Naive thymus-derived CD4-positive, alpha-beta T cell (primary cell): ENCODE measurements at regions of chr12 and their contacts with region 1.

Region 1: GRCh38 chr12:110826592-110827200 is 20.1 kb upstream of the CCDC63 start:
- DNase-seq: peak; percentile 61 to 85 (median 77)
- ATAC-seq: peak; percentile 98
- H3K4me3 ChIP-seq: no peak overlapping the region
- H3K4me3 Mint-ChIP-seq: peak overlapping the region in 9 of 10 donors; percentile 35 to 75 (median 58)
- H3K27ac ChIP-seq: no peak overlapping the region
- H3K27ac Mint-ChIP-seq: peak overlapping the region in 8 of 9 donors; percentile 4 to 81 (median 20)
- H3K4me1 ChIP-seq: no peaks in the 10 kb centered on the region
- H3K4me1 Mint-ChIP-seq: peaks cover 0 to 10% (median 6%) of the 10 kb centered on the region in 7 donors
- H3K27me3 ChIP-seq: no peaks in the 10 kb centered on the region
- H3K27me3 Mint-ChIP-seq: peaks cover 0 to 4% (median 0%) of the 10 kb centered on the region in 5 donors

Region 2: GRCh38 chr12:110548678-110549077 is 278.0 kb before region 1 on chr12:
- CTCF ChIA-PET with region 1: no interaction called
- POLR2A ChIA-PET with region 1: no interaction called
- intact Hi-C with region 1: loop called (anchors 1 to 5 kb)
- DNase-seq: no peak
- ATAC-seq: no peak
- H3K4me3 ChIP-seq: no peak overlapping the region
- H3K4me3 Mint-ChIP-seq: no peak overlapping the region
- H3K27ac ChIP-seq: no peak overlapping the region
- H3K27ac Mint-ChIP-seq: peak overlapping the region in 3 of 9 donors; percentile 28 to 68 (median 55)
- H3K4me1 ChIP-seq: no peaks in the 10 kb centered on the region
- H3K4me1 Mint-ChIP-seq: peaks cover 10 to 55% (median 44%) of the 10 kb centered on the region in 7 donors
- H3K27me3 ChIP-seq: no peaks in the 10 kb centered on the region
- H3K27me3 Mint-ChIP-seq: no peaks in the 10 kb centered on the region

Region 3: DNA sequence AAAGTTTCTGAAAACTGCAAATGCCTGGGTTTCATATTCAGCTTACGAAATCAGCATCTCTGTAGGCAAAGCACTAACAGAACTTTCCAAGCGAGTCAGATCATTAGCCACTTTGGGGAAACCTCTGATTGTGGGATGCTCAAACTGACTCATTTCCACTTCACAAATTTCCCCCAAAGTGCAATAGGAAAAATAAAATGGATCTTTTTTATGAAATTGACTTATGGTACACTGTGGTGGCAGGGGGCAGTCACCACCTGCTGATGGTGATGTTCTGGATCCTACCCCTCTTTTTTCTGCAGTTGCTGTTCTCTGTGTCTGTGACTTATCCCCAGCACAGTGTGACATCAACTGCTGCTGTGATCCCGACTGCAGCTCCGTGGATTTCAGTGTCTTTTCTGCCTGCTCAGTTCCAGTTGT is 207.2 kb before region 1 on chr12:
- CTCF ChIA-PET with region 1: no interaction called
- POLR2A ChIA-PET with region 1: interaction called, 8 read pairs
- intact Hi-C with region 1: loop called (anchors 1 kb)
- DNase-seq: peak in 2 of 9 donors; percentile 15 to 26
- ATAC-seq: no peak
- H3K4me3 ChIP-seq: no peak overlapping the region
- H3K4me3 Mint-ChIP-seq: no peak overlapping the region
- H3K27ac ChIP-seq: no peak overlapping the region
- H3K27ac Mint-ChIP-seq: no peak overlapping the region
- H3K4me1 ChIP-seq: peaks cover under 1 to 1% of the 10 kb centered on the region in 2 donors
- H3K4me1 Mint-ChIP-seq: peaks cover 0 to 11% (median under 1%) of the 10 kb centered on the region in 7 donors
- H3K27me3 ChIP-seq: no peaks in the 10 kb centered on the region
- H3K27me3 Mint-ChIP-seq: no peaks in the 10 kb centered on the region

Region 4: DNA sequence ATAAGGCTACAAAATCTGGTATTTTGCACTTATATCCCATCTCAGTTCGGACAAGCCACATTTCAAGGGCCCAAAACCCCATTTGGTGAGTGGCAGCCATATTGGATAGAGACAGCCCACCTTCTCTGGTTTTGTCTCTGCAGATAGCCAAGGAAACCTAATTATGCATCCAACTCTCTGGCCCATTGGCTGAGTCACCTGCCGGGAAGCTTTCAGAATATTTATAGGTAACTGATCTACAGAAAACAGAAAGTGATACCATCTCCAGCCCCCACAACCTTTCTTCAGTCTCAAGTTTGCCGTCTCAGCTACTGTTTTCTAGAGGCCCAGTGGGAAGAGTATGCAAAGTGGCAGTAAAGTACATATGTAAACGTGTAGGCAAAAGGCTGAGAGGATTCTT is 50.3 kb before region 1 on chr12:
- CTCF ChIA-PET with region 1: no interaction called
- POLR2A ChIA-PET with region 1: interaction called, 3 read pairs
- intact Hi-C with region 1: loop called (anchors 2 to 5 kb)
- DNase-seq: peak in 1 of 9 donors; percentile 64
- ATAC-seq: no peak
- H3K4me3 ChIP-seq: no peak overlapping the region
- H3K4me3 Mint-ChIP-seq: peak overlapping the region in 5 of 10 donors; percentile 4 to 60 (median 7)
- H3K27ac ChIP-seq: no peak overlapping the region
- H3K27ac Mint-ChIP-seq: peak overlapping the region; percentile 12 to 91 (median 64)
- H3K4me1 ChIP-seq: peaks cover 9 to 43% of the 10 kb centered on the region in 2 donors
- H3K4me1 Mint-ChIP-seq: peaks cover 28 to 66% (median 60%) of the 10 kb centered on the region in 7 donors
- H3K27me3 ChIP-seq: no peaks in the 10 kb centered on the region
- H3K27me3 Mint-ChIP-seq: no peaks in the 10 kb centered on the region

Region 5: DNA sequence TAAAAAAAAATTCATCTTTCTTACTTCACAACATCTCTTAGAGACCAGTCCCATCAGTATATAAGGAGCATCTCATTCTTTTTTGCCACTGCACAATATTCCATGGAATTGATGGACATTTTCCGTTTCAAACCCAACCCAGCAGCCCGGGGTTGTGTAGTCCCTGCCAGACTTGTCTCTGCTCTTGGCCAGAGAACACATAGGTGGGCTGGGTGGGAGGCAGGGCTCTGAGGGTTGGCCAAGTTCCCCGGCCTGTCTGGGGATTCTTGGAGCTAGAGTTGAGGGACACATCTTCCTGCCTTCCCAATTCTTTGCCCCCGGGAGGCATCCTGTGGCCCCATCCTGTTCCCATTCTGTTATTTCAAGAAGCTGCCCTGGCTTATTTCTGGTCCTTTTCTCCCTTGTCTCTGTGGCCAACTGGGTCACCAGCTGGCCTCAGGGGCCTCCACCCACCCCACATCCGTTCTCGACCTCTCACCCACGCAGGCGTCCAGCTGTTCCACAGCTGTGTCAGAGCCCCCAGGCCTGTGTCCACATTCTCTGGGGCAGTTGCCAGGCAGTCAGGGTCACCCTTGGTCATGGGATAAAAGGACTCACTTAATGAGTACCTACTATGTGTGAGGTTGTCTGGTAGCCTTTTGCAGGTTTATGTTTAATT is 31.9 kb before region 1 on chr12:
- CTCF ChIA-PET with region 1: no interaction called
- POLR2A ChIA-PET with region 1: no interaction called
- intact Hi-C with region 1: no loop called
- DNase-seq: no peak
- ATAC-seq: no peak
- H3K4me3 ChIP-seq: no peak overlapping the region
- H3K4me3 Mint-ChIP-seq: no peak overlapping the region
- H3K27ac ChIP-seq: no peak overlapping the region
- H3K27ac Mint-ChIP-seq: peak overlapping the region in 1 of 9 donors; percentile 51
- H3K4me1 ChIP-seq: no peaks in the 10 kb centered on the region
- H3K4me1 Mint-ChIP-seq: peaks cover 0 to 10% (median 4%) of the 10 kb centered on the region in 7 donors
- H3K27me3 ChIP-seq: no peaks in the 10 kb centered on the region
- H3K27me3 Mint-ChIP-seq: no peaks in the 10 kb centered on the region